PC-9 (cell line): ENCODE measurements at regions of chr7 and their contacts with region 1.

Region 1: GRCh38 chr7:22667562-22668239 is 59.3 kb upstream of the IL6 start:
- DNase-seq: peak; percentile 87 to 100
- H3K4me3 ChIP-seq: no peak overlapping the region; the same call in 1 of the 2 replicates
- H3K27ac ChIP-seq: peak overlapping the region; percentile 94
- H3K4me1 ChIP-seq: peaks cover 71% of the 10 kb centered on the region
- H3K27me3 ChIP-seq: no peaks in the 10 kb centered on the region
- CTCF ChIP-seq: no peak

Region 2: DNA sequence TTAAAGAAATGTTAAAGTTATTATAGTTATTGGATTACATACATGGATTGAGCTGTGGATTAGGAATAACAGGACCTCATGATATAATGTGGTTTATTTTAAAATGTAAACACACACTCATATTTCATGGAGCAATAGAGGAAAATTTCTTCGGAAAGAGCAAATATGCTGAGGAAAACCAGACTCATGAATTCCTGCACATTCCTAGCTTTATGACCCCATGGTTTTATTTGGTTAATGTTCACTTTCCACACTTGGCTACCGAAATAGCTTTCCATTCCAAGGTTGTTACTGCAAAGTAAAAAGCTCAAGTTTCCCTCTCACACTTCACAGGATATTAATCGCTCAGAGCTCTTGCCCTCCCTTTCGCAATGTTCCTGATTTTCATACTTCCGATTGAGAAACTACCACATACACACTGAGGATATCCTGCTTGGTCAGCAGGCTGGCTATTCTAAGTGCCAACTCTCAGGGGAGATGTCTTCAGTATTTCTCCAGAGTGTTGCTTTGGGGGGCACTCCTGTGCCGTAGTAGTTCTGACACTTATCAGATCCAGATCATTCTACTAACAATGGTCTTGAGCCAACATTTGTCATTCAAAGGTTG is 90.2 kb before region 1 on chr7:
- CTCF ChIA-PET with region 1: interaction called, 3 read pairs
- POLR2A ChIA-PET with region 1: interaction called, 5 read pairs
- intact Hi-C with region 1: loop called (anchors 1 kb)
- DNase-seq: peak; percentile 54 to 100
- H3K4me3 ChIP-seq: peak overlapping the region; percentile 19; the same call in 1 of the 2 replicates
- H3K27ac ChIP-seq: peak overlapping the region; percentile 95
- H3K4me1 ChIP-seq: peaks cover 78% of the 10 kb centered on the region
- H3K27me3 ChIP-seq: no peaks in the 10 kb centered on the region
- CTCF ChIP-seq: no peak

Region 3: DNA sequence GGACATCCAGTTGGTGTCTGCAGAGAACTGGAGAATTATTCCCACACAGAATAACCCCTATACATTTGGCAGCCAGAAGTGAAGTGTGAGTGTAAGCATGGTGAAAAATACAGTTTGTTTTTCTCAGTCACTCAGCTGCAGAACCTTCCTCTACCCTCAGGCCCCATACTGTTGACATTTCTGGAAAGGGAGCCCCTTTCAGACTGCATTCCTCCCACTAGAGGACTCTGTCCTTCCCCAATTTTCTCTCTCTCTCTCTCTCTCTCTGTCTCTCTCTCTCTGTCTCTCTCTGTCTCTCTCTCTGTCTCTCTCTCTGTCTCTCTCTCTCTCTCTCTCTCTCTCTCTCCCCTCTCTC is 80.9 kb before region 1 on chr7:
- CTCF ChIA-PET with region 1: no interaction called
- POLR2A ChIA-PET with region 1: interaction called, 4 read pairs
- intact Hi-C with region 1: loop called (anchors 1 kb)
- DNase-seq: peak in 1 of 2 experiments; percentile 67
- H3K4me3 ChIP-seq: no peak overlapping the region
- H3K27ac ChIP-seq: no peak overlapping the region
- H3K4me1 ChIP-seq: peaks cover 46% of the 10 kb centered on the region
- H3K27me3 ChIP-seq: no peaks in the 10 kb centered on the region
- CTCF ChIP-seq: peak; percentile 83

Region 4: GRCh38 chr7:22718200-22718711 is 50.6 kb after region 1 on chr7:
- CTCF ChIA-PET with region 1: interaction called, 3 read pairs
- POLR2A ChIA-PET with region 1: no interaction called
- intact Hi-C with region 1: loop called (anchors 2 kb)
- DNase-seq: peak; percentile 18 to 94
- H3K4me3 ChIP-seq: no peak overlapping the region
- H3K27ac ChIP-seq: peak overlapping the region; percentile 69
- H3K4me1 ChIP-seq: peaks cover 20% of the 10 kb centered on the region
- H3K27me3 ChIP-seq: no peaks in the 10 kb centered on the region
- CTCF ChIP-seq: no peak

Region 5: GRCh38 chr7:22732556-22733126 is 64.9 kb after region 1 on chr7:
- CTCF ChIA-PET with region 1: interaction called, 4 read pairs
- POLR2A ChIA-PET with region 1: no interaction called
- intact Hi-C with region 1: loop called (anchors 1 kb)
- DNase-seq: peak; percentile 33 to 70
- H3K4me3 ChIP-seq: no peak overlapping the region
- H3K27ac ChIP-seq: no peak overlapping the region
- H3K4me1 ChIP-seq: peaks cover 35% of the 10 kb centered on the region
- H3K27me3 ChIP-seq: no peaks in the 10 kb centered on the region
- CTCF ChIP-seq: peak; percentile 86

Region 6: DNA sequence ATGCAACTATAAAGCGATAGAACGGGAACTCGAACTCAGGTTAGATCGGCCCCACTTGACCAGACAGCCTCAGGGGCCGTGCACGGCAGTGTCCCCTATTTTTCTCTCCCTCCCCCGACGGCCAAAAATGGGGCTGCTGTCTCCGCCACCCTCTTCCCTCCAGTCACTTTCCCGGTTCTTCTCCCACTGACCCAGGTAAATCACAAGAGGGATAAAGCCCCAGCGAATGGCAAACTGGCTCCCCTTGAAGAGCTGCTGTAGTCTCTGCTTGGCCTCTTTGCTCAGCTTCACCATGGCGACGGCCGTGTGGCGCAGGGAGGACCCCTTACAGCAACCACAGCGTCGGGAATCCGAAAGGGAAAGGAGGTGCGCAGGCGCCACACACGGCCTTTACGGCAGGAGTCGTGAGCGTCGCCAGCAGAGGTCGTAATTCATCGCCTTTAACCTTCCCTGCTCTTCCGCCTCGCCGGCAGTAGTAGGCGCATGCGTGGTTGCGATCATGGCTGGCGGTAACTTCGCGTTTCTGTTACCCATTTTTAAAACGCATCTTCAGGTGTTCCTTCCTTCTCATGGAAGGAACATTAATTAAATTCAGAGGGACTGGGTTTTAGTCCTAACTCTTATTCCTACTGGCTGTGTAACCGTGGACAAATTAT is 154.9 kb after region 1 on chr7 and contains the start of gene TOMM7:
- CTCF ChIA-PET with region 1: interaction called, 10 read pairs
- POLR2A ChIA-PET with region 1: no interaction called
- intact Hi-C with region 1: loop called (anchors 2 kb)
- DNase-seq: peak; percentile 90 to 94
- H3K4me3 ChIP-seq: peak within 1 kb of the TSS; percentile 99
- H3K27ac ChIP-seq: peak within 1 kb of the TSS; percentile 33
- H3K4me1 ChIP-seq: peaks cover 29% of the 10 kb centered on the region
- H3K27me3 ChIP-seq: no peaks in the 10 kb centered on the region
- CTCF ChIP-seq: peak; percentile 65
- total RNA-seq, gene TOMM7: 588 and 703 TPM in 2 replicates